Caco-2 (cell line): ENCODE measurements at regions of chr4 and their contacts with region 1.

Region 1: GRCh38 chr4:2583517-2583916 is 47.1 kb downstream of the FAM193A start:
- DNase-seq: peak in 1 of 2 experiments; percentile 53
- H3K4me3 ChIP-seq: no peak overlapping the region
- H3K4me3 Mint-ChIP-seq: peak overlapping the region; percentile 54
- H3K27ac Mint-ChIP-seq: peak overlapping the region; percentile 55
- H3K4me1 ChIP-seq: peaks cover 10% of the 10 kb centered on the region
- H3K4me1 Mint-ChIP-seq: peaks cover 20% of the 10 kb centered on the region
- H3K27me3 ChIP-seq: no peaks in the 10 kb centered on the region
- H3K27me3 Mint-ChIP-seq: no peaks in the 10 kb centered on the region
- CTCF ChIP-seq: no peak

Region 2: DNA sequence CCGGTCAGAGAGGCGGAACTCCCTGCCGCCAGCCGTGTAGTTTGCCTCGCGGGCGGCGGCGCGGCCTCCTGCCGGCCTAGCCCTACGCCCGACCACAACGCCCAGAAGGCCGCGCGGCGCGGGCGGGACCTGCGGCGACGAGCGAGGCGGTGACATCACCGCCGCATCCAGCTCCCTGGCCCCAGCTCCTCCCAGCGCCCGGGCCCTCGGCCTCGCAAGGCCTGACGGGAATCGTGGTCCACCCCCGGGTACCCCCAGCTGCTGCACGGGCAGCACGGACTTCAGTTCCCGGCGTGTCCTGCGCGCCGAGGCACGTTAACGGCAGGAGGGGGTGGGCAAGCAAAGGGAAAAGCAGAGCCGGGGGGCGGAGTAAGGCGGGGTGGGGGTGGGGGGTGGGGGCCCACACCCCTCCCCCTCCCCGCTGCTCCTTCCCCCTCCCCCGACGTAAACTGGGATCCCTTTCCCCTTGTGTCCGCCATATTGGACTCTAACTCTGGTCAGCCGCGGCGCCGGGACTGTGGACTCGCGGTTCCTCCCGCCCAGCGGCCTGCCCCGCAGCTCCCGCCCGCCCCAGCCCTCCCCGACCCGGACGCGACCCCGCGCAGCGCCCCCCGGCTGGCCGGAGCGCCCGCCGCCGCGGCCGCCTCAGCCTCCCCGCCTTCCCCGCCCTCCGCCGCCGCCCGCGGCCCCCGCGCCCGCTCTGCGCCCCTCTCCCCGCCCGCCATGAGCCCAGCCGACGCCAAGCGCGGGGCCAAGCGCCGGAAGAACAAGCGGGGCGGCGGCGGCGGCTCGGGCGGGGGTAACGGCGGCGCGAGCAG is 47.1 kb before region 1 on chr4 and contains the start of gene FAM193A:
- CTCF ChIA-PET with region 1: no interaction called
- POLR2A ChIA-PET with region 1: interaction called, 6 read pairs
- intact Hi-C with region 1: loop called (anchors 1 kb)
- DNase-seq: peak; percentile 99
- H3K4me3 ChIP-seq: peak within 1 kb of the TSS; percentile 92
- H3K4me3 Mint-ChIP-seq: peak within 1 kb of the TSS; percentile 88
- H3K27ac Mint-ChIP-seq: peak within 1 kb of the TSS; percentile 88
- H3K4me1 ChIP-seq: no peaks in the 10 kb centered on the region
- H3K4me1 Mint-ChIP-seq: no peaks in the 10 kb centered on the region
- H3K27me3 ChIP-seq: no peaks in the 10 kb centered on the region
- H3K27me3 Mint-ChIP-seq: no peaks in the 10 kb centered on the region
- CTCF ChIP-seq: no peak
- total RNA-seq, gene FAM193A: 28.7 and 31.2 TPM in 2 replicates